Naive thymus-derived CD4-positive, alpha-beta T cell (primary cell): ENCODE measurements at regions of chr11 and their contacts with region 1.

Region 1: GRCh38 chr11:44950625-44951476 is at the start of gene TP53I11:
- DNase-seq: peak in 8 of 9 donors; percentile 27 to 79 (median 32)
- ATAC-seq: peak; percentile 78
- H3K4me3 ChIP-seq: peak within 1 kb of the TSS; percentile 62
- H3K4me3 Mint-ChIP-seq: peak within 1 kb of the TSS; percentile 58 to 87 (median 81)
- H3K27ac ChIP-seq: no peak within 1 kb of the TSS
- H3K27ac Mint-ChIP-seq: peak within 1 kb of the TSS in 2 of 9 donors; percentile 48 to 76
- H3K4me1 ChIP-seq: peaks cover 0 to 6% of the 10 kb centered on the region in 2 donors
- H3K4me1 Mint-ChIP-seq: peaks cover 0 to 17% (median 6%) of the 10 kb centered on the region in 7 donors
- H3K27me3 ChIP-seq: no peaks in the 10 kb centered on the region
- H3K27me3 Mint-ChIP-seq: peaks cover 0 to 37% (median 8%) of the 10 kb centered on the region in 5 donors
- total RNA-seq, gene TP53I11: 0.40 to 7.6 (median 2.0) TPM

Region 2: GRCh38 chr11:45031912-45032519 is 81.2 kb after region 1 on chr11:
- CTCF ChIA-PET with region 1: no interaction called
- POLR2A ChIA-PET with region 1: no interaction called
- intact Hi-C with region 1: no loop called
- DNase-seq: no peak
- ATAC-seq: peak; percentile 44
- H3K4me3 ChIP-seq: no peak overlapping the region
- H3K4me3 Mint-ChIP-seq: no peak overlapping the region
- H3K27ac ChIP-seq: no peak overlapping the region
- H3K27ac Mint-ChIP-seq: peak overlapping the region in 1 of 9 donors; percentile 48
- H3K4me1 ChIP-seq: no peaks in the 10 kb centered on the region
- H3K4me1 Mint-ChIP-seq: peaks cover 0 to 11% (median 0%) of the 10 kb centered on the region in 7 donors
- H3K27me3 ChIP-seq: no peaks in the 10 kb centered on the region
- H3K27me3 Mint-ChIP-seq: peaks cover 0 to 17% (median 0%) of the 10 kb centered on the region in 5 donors

Region 3: GRCh38 chr11:45079943-45080719 is 129.3 kb after region 1 on chr11:
- CTCF ChIA-PET with region 1: interaction called, 3 read pairs
- POLR2A ChIA-PET with region 1: no interaction called
- intact Hi-C with region 1: loop called in 1 of 2 experiments (anchors 5 kb)
- DNase-seq: peak; percentile 22 to 70 (median 65)
- ATAC-seq: peak; percentile 86
- H3K4me3 ChIP-seq: peak overlapping the region; percentile 42
- H3K4me3 Mint-ChIP-seq: peak overlapping the region; percentile 39 to 82 (median 72)
- H3K27ac ChIP-seq: peak overlapping the region; percentile 60
- H3K27ac Mint-ChIP-seq: peak overlapping the region; percentile 88 to 96 (median 93)
- H3K4me1 ChIP-seq: peaks cover 32 to 62% of the 10 kb centered on the region in 2 donors
- H3K4me1 Mint-ChIP-seq: peaks cover 29 to 63% (median 55%) of the 10 kb centered on the region in 7 donors
- H3K27me3 ChIP-seq: no peaks in the 10 kb centered on the region
- H3K27me3 Mint-ChIP-seq: peaks cover 0 to 4% (median 0%) of the 10 kb centered on the region in 5 donors